Mammary epithelial cell (primary cell): ENCODE measurements at regions of chr3 and their contacts with region 1.

Region 1: DNA sequence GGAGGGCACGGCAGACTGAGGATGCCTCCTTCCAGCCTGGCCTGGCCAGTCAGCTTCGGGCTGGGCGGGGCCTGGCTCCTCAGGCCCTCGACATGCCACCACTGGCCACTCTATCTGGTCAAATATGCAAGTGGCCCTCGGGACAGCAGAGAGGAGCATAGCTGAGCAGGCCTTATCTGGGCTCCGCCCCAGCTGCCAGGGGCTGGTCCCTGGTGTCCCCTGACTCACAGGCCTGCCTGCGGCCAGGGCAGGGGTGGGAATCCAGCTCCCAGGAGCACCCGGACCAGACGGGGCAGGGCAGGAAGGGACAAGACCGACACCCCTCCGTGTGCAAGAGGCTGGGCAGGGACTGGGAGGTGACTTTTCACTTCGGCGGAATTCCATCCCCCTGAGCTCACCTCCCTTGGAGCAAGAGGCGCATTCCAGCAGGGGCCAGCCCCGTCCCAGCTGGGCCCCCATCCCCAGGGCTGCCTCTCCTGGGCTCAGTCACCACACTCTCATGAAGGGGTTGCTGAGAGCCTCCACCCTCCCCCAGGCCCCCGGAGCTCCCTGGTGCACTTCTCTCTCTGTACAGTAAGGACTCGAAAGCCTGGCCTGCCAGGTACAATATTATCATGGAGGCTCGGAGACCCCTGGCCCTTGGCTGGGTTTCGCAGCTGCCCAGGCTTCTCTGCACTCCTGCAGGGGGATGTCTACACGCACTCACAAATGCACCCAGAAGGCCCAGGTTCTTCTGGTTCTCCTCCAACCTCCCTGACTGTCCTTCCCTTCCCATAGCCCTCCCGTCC is 29.5 kb downstream of the WNT7A start:
- DNase-seq: peak; percentile 94
- H3K4me3 ChIP-seq: no peak overlapping the region
- H3K27ac ChIP-seq: peak overlapping the region; percentile 51
- H3K4me1 ChIP-seq: peaks cover 69% of the 10 kb centered on the region
- H3K27me3 ChIP-seq: no peaks in the 10 kb centered on the region
- CTCF ChIP-seq: no peak

Region 2: DNA sequence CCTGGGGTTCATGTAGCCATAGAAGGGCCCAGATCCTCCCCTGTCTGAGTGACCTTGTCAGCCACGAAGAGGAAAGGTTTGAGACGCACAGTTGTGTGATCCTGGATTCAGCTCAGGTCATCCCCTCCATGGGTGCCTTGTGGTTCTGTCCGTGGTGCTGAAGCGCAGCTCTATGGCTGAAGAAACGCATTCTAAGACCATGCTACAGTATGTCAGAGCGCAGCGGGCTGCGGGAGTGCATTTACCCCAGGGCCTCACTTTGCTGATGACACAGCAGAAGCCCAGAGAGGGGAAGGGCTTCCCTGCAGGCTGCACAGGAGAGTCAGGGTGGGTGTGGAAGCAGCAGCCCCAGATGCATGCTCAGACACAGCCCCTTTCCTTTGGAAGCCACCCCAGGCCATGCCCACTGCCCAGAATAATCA is 708.4 kb before region 1 on chr3:
- CTCF ChIA-PET with region 1: no interaction called
- dilution Hi-C with region 1: no loop called
- in situ Hi-C with region 1: no loop called
- intact Hi-C with region 1: no loop called
- DNase-seq: peak; percentile 15
- H3K4me3 ChIP-seq: no peak overlapping the region
- H3K27ac ChIP-seq: no peak overlapping the region
- H3K4me1 ChIP-seq: no peaks in the 10 kb centered on the region
- H3K27me3 ChIP-seq: no peaks in the 10 kb centered on the region
- CTCF ChIP-seq: no peak

Region 3: GRCh38 chr3:13600941-13601576 is 249.3 kb before region 1 on chr3:
- CTCF ChIA-PET with region 1: no interaction called
- dilution Hi-C with region 1: no loop called
- in situ Hi-C with region 1: no loop called
- intact Hi-C with region 1: loop called (anchors 5 kb)
- DNase-seq: peak; percentile 97
- H3K4me3 ChIP-seq: no peak overlapping the region
- H3K27ac ChIP-seq: peak overlapping the region; percentile 55
- H3K4me1 ChIP-seq: peaks cover 33% of the 10 kb centered on the region
- H3K27me3 ChIP-seq: no peaks in the 10 kb centered on the region
- CTCF ChIP-seq: no peak

Region 4: DNA sequence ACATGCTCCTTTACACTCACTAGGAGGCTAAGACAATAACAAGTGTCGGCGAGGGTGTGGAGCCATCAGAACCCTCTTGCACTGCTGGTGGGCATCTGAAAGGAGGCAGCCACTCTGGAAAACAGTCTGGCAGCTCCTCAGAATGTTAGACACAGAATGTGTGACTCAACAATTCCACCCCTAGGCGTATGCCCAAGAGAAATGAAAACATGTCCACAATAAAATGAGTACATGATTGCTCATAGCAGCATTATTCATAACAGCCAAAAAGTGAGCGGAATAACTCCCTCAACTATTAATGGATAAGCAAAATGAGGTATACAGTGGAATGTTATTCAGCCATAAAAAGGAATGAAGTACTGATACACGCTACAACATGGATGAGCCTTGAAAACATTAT is 28.3 kb before region 1 on chr3:
- CTCF ChIA-PET with region 1: interaction called, 3 read pairs
- dilution Hi-C with region 1: no loop called
- in situ Hi-C with region 1: no loop called
- intact Hi-C with region 1: loop called (anchors 2 kb)
- DNase-seq: peak; percentile 94
- H3K4me3 ChIP-seq: no peak overlapping the region
- H3K27ac ChIP-seq: peak overlapping the region; percentile 30
- H3K4me1 ChIP-seq: peaks cover 39% of the 10 kb centered on the region
- H3K27me3 ChIP-seq: no peaks in the 10 kb centered on the region
- CTCF ChIP-seq: no peak

Region 5: DNA sequence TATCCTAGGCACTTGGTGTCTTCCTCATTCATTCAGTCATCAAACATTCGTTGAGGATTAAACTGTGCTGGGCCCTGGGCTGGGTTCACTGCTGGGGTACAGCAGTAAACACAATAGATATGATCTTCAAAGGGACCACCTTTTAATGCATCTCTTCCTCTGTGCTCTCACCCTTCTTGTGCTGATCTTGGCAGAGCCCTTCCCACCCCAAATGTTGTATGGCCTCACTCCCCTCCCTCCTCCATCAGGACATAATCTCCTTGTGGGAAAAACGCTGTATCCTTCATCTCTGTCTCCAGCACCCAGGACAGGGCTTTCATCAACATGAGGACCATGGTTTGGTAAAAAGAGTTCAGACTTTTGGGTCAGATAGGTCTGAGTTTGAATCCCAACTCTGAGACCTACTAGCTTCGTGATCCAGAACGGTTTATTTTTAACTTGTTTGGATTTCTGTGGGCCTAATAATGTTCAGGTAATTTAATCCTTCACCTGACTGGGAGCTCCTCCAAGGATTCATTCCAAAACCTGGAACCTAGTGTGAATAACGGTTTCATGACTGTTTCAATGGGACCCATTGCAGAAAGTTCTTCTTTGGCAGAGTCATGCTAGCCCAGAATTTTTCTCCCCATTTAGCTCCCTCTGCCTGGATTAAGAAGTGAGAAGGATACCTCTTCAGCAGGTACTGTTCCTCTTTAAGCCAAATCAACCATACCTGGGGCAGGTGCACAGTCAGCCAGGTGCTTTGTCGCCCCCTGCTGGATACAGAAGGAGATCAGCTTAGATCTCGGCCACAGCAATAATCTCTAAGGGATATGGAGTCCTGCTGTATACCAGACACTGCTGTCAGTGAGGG is 34.7 kb after region 1 on chr3:
- CTCF ChIA-PET with region 1: no interaction called
- dilution Hi-C with region 1: no loop called
- in situ Hi-C with region 1: no loop called
- intact Hi-C with region 1: loop called (anchors 2 kb)
- DNase-seq: peak; percentile 56
- H3K4me3 ChIP-seq: no peak overlapping the region
- H3K27ac ChIP-seq: no peak overlapping the region
- H3K4me1 ChIP-seq: peaks cover 9% of the 10 kb centered on the region
- H3K27me3 ChIP-seq: no peaks in the 10 kb centered on the region
- CTCF ChIP-seq: peak; percentile 82 to 91

Region 6: GRCh38 chr3:15319575-15319974 is 1469.2 kb after region 1 on chr3:
- CTCF ChIA-PET with region 1: no interaction called
- dilution Hi-C with region 1: no loop called
- in situ Hi-C with region 1: no loop called
- intact Hi-C with region 1: loop called (anchors 10 kb)
- DNase-seq: peak; percentile 34
- H3K4me3 ChIP-seq: no peak overlapping the region
- H3K27ac ChIP-seq: peak overlapping the region; percentile 14
- H3K4me1 ChIP-seq: peaks cover 34% of the 10 kb centered on the region
- H3K27me3 ChIP-seq: no peaks in the 10 kb centered on the region
- CTCF ChIP-seq: no peak